ENCODE measurements at regions of chr14 and their contacts with region 1.

Region 1: GRCh38 chr14:65164068-65164824 is 61.9 kb upstream of the MAX start:
- DNase-seq: peak in 1 of 4 donors; percentile 57
- ATAC-seq: peak; percentile 86
- H3K4me3 ChIP-seq: no peak overlapping the region
- H3K27ac ChIP-seq: no peak overlapping the region
- H3K4me1 ChIP-seq: peaks cover 0 to 5% of the 10 kb centered on the region in 2 donors
- H3K27me3 ChIP-seq: no peaks in the 10 kb centered on the region
- CTCF ChIP-seq: peak; percentile 43 to 48

Region 2: DNA sequence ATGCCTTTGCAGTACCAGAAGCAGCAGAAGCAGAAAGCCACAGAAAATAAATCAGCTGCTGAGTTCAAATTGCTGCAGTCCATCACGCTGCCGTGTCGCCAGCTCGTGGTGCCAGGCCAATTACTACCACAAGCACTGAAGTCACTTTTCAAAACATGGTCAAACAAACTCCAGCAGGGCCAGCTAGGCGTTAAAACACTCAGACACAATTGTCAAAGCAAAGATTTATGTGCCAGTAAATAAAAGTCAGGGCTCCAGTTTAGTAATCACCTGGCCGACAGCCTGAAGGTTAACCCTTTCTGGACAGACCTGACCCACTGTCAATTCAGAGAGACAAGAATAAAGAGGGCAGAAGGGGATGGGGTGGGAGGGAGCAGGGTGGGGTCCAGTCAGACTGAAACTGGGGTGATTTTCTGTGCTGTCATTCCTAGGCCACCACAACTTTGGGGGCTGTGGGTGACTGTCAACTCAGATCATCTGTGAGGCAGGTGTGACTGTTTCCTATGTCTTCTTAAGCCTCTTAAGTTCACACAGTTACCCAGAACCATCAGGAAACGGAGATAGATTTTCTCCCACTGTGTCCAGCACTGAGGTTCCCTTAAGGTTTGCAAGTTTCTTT is 138.4 kb after region 1 on chr14:
- intact Hi-C with region 1: no loop called
- DNase-seq: no peak
- ATAC-seq: peak; percentile 61
- H3K4me3 ChIP-seq: no peak overlapping the region
- H3K27ac ChIP-seq: peak overlapping the region; percentile 7 to 30
- H3K4me1 ChIP-seq: peaks cover 0 to 8% of the 10 kb centered on the region in 2 donors
- H3K27me3 ChIP-seq: no peaks in the 10 kb centered on the region
- CTCF ChIP-seq: no peak

Region 3: DNA sequence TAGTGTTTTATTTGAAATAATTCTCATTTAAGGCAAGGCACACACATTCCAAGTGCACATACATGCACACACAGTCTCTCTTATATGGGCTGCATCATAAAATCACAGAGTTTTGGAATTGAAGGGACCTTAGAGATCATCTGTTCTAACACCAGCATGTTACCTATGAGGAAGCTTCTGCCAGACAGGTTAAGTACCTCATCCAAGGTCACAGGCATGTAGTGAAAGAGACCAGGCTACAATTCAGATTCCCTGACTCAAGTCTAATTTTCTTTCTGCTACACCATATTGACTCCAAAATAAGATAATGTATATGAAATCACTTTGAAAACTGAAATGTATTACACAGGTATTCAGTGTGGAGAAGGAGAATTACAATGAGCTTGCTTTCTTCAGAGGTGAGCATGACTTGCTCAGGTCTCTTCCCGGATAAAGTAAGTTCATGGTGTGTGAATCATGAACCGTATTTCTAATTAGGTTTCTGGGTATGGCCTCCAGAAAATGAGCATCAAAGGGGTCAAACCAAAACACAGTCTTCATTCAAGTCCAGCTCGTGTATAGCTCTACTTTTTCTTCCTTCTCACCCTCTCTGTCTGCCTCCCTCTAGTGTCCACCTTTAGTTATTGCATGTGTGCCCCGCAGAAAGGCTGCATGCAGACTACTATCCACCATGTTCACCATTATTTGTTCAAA is 660.2 kb after region 1 on chr14:
- intact Hi-C with region 1: loop called in 1 of 2 experiments (anchors 10 kb)
- DNase-seq: peak in 2 of 4 donors; percentile 47 to 69
- ATAC-seq: peak; percentile 98
- H3K4me3 ChIP-seq: no peak overlapping the region
- H3K27ac ChIP-seq: no peak overlapping the region
- H3K4me1 ChIP-seq: no peaks in the 10 kb centered on the region
- H3K27me3 ChIP-seq: peaks cover 0 to 13% of the 10 kb centered on the region in 2 donors
- CTCF ChIP-seq: peak; percentile 88 to 91

Region 4: DNA sequence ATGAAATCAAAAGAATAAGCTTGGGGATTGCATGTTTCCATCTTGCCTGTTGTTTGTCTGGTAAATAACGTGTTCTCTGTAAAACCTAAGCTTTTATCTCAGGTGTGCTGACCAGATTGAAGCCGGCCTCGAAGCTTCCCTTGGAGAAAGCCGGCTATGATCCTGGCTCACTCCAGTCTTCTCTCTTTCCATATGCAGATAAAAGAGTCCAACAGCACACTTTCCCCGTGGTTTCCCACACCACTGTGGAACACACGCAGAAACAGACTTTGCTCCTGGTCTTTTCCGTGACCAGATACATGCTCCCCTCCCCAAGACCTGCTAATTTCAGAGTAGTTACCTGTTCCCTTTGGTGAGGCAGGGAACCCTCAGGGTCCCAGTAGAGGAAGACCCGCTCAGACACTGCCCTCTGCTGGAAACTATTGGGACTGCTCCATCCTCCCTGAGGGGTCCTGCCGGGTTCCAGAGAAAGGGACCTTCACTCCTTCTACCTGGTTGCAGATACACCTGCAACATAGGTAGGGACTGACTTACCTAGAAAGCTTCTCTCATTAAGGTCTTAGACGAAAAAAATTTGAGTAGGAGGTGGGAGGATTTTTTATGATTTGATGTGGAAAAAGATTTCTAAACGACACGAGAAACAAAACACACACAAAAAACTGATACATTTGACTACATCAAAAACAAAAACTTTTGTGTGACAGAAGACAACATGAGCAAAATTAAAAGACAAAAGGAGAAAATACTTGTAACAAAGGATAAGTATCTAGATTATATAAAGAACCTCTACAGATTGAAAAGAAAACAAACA is 906.5 kb after region 1 on chr14:
- intact Hi-C with region 1: loop called in 1 of 2 experiments (anchors 10 kb)
- DNase-seq: peak in 1 of 4 donors; percentile 27
- ATAC-seq: peak; percentile 87
- H3K4me3 ChIP-seq: no peak overlapping the region
- H3K27ac ChIP-seq: no peak overlapping the region
- H3K4me1 ChIP-seq: no peaks in the 10 kb centered on the region
- H3K27me3 ChIP-seq: no peaks in the 10 kb centered on the region
- CTCF ChIP-seq: peak; percentile 71 to 80

Measured in left lung (tissue), 14 donors.